PC-9 (cell line): ENCODE measurements at regions of chr5 and their contacts with region 1.

Region 1: DNA sequence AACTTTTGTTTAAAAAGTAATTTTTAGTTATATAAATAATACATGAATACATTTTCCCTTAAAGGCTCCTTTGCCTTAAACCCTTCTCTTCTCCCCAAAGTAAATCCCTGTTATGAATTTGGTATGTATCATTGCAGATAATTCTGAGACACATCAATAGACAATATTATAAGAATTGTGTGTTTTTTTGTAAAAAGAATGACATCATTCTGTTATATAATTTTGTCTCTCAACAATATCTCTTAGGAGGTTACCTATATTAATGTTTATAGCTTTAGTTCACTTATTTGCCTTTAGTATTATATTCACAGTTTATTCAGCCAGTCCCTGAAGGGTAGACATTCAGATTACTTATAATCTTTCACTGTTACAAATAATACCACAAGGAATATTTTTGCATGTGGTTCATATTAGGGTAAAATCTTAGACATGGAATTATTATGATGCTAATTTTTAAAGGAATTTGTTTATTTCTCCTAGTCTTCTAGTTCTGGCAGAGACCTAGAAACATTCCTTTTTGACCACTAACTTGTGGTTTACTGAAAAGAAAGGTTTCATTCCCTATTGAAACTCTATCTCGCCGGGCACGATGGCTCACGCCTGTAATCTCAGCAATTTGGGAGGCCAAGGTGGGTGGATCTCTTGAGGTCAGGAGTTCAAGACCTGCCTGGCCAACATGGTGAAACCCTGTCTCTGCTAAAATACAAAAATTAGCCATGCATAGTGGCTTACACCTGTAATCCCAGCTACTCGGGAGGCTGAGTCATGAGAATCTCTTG is 105.6 kb downstream of the KCTD16 start:
- DNase-seq: no peak
- H3K4me3 ChIP-seq: no peak overlapping the region
- H3K27ac ChIP-seq: no peak overlapping the region
- H3K4me1 ChIP-seq: no peaks in the 10 kb centered on the region
- H3K27me3 ChIP-seq: no peaks in the 10 kb centered on the region; the same call in 1 of the 2 replicates
- CTCF ChIP-seq: no peak

Region 2: GRCh38 chr5:143648696-143649095 is 627.5 kb before region 1 on chr5:
- CTCF ChIA-PET with region 1: no interaction called
- POLR2A ChIA-PET with region 1: no interaction called
- intact Hi-C with region 1: no loop called
- DNase-seq: no peak
- H3K4me3 ChIP-seq: no peak overlapping the region
- H3K27ac ChIP-seq: no peak overlapping the region
- H3K4me1 ChIP-seq: peaks cover 14% of the 10 kb centered on the region
- H3K27me3 ChIP-seq: no peaks in the 10 kb centered on the region
- CTCF ChIP-seq: no peak

Region 3: DNA sequence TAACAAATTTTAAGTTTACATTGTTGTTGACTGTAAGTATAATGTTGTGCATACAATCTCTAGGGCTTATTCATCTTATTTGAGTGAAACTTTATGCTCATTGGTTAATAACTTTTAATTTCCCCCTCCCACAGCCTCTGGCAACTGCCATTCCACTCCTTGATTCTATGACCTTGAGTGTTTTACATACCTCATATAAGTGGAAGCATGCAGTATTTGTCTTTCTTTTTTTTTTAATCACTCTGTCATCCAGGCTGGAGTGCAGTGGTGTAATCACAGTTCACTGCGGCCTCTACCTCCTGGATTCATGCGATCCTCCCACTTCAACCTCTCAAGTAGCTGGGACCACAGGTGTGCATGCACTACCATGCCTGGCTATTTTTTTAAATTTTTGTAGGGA is 21.7 kb before region 1 on chr5:
- CTCF ChIA-PET with region 1: no interaction called
- POLR2A ChIA-PET with region 1: interaction called, 17 read pairs
- intact Hi-C with region 1: no loop called
- DNase-seq: no peak
- H3K4me3 ChIP-seq: no peak overlapping the region
- H3K27ac ChIP-seq: no peak overlapping the region
- H3K4me1 ChIP-seq: no peaks in the 10 kb centered on the region
- H3K27me3 ChIP-seq: no peaks in the 10 kb centered on the region
- CTCF ChIP-seq: no peak

Region 4: DNA sequence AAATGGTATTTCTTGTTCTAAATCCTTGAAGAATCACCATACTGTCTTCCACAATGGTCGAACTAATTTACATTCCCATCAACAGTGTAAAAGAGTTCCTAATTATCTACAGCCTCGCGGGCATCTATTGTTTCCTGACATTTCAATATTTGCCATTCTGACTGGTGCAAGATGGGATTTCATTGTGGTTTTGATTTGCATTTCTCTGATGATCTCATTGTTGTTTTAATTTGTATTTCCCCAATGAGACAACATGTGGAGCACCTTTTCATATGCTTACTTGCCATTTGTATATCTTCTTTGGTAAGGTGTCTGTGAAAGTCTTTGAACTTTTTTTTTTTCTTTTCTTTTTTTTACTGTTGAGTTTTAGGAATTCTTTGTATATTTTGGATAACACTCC is 368.1 kb after region 1 on chr5:
- CTCF ChIA-PET with region 1: no interaction called
- POLR2A ChIA-PET with region 1: no interaction called
- intact Hi-C with region 1: no loop called
- DNase-seq: no peak
- H3K4me3 ChIP-seq: no peak overlapping the region
- H3K27ac ChIP-seq: no peak overlapping the region
- H3K4me1 ChIP-seq: no peaks in the 10 kb centered on the region
- H3K27me3 ChIP-seq: no peaks in the 10 kb centered on the region
- CTCF ChIP-seq: no peak